GM12878 (cell line): ENCODE measurements at regions of chr5 and their contacts with region 1.

Region 1: GRCh38 chr5:76175051-76175666 is 92.0 kb downstream of the SV2C start:
- DNase-seq: peak; percentile 32
- ATAC-seq: peak; percentile 82
- H3K4me3 ChIP-seq: peak overlapping the region; percentile 45; the same call in 1 of the 2 replicates
- H3K27ac ChIP-seq: peak overlapping the region; percentile 57
- H3K4me1 ChIP-seq: peaks cover 25% of the 10 kb centered on the region
- H3K27me3 ChIP-seq: no peaks in the 10 kb centered on the region
- CTCF ChIP-seq: peak; percentile 83 to 89 (median 84)
- EP300 ChIP-seq: no peak
- POLR2A ChIP-seq: no peak
- RAD21 ChIP-seq: peak; percentile 94

Region 2: GRCh38 chr5:75236322-75237316 is 938.5 kb before region 1 on chr5 and contains the start of gene ANKRD31:
- CTCF ChIA-PET with region 1: interaction called, 18 read pairs
- POLR2A ChIA-PET with region 1: no interaction called
- RAD21 ChIA-PET with region 1: interaction called, 5 read pairs
- SMC1A ChIA-PET with region 1: interaction called, 4 read pairs
- in situ Hi-C with region 1: no loop called
- intact Hi-C with region 1: loop called (anchors 10 kb)
- DNase-seq: peak; percentile 42
- ATAC-seq: peak; percentile 100
- H3K4me3 ChIP-seq: peak within 1 kb of the TSS; percentile 63
- H3K27ac ChIP-seq: no peak within 1 kb of the TSS
- H3K4me1 ChIP-seq: peaks cover 3% of the 10 kb centered on the region; the same call in 1 of the 2 replicates
- H3K27me3 ChIP-seq: no peaks in the 10 kb centered on the region
- CTCF ChIP-seq: peak; percentile 60 to 85 (median 72); a peak in 5 of 6 replicates
- EP300 ChIP-seq: peak in 1 of 2 experiments; percentile 16; a peak in 1 of 4 replicates
- POLR2A ChIP-seq: peak; percentile 71
- RAD21 ChIP-seq: peak; percentile 64
- polyA plus RNA-seq, gene ANKRD31: 0.02 TPM in 1 of 2 experiments, not detected in the other

Region 3: DNA sequence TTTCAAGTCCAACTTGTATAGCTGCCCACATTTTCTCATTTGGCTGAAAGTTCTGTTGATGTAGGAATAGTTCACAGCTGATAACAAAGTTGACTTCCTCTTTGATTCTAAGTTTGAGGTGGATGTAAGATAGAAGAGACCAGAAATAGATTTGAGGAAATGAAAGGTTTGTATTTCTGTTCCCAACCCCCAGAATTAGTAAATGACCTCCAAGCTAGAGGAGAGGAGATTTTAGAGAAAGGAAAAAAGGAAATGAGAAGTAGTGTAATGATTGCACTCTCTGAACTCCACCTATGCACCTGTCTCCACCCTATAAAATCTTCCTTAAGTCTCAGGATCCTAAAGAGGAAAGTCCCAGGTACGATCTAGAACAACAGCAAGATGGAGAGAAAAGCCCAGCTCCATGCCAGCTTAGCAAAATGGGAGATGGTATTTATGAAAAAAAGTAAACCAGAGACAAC is 327.6 kb before region 1 on chr5:
- CTCF ChIA-PET with region 1: interaction called, 4 read pairs
- POLR2A ChIA-PET with region 1: no interaction called
- RAD21 ChIA-PET with region 1: interaction called, 6 read pairs
- SMC1A ChIA-PET with region 1: no interaction called
- in situ Hi-C with region 1: no loop called
- intact Hi-C with region 1: loop called (anchors 5 kb)
- DNase-seq: peak; percentile 83
- ATAC-seq: peak; percentile 89
- H3K4me3 ChIP-seq: peak overlapping the region; percentile 12; the same call in 1 of the 2 replicates
- H3K27ac ChIP-seq: peak overlapping the region; percentile 90
- H3K4me1 ChIP-seq: peaks cover 29% of the 10 kb centered on the region
- H3K27me3 ChIP-seq: no peaks in the 10 kb centered on the region
- CTCF ChIP-seq: no peak
- EP300 ChIP-seq: peak; percentile 96 to 98
- POLR2A ChIP-seq: no peak
- RAD21 ChIP-seq: peak; percentile 24

Region 4: GRCh38 chr5:76062502-76063041 is 112.6 kb before region 1 on chr5:
- CTCF ChIA-PET with region 1: no interaction called
- POLR2A ChIA-PET with region 1: no interaction called
- RAD21 ChIA-PET with region 1: no interaction called
- SMC1A ChIA-PET with region 1: no interaction called
- in situ Hi-C with region 1: no loop called
- intact Hi-C with region 1: no loop called
- DNase-seq: no peak
- ATAC-seq: no peak
- H3K4me3 ChIP-seq: no peak overlapping the region
- H3K27ac ChIP-seq: no peak overlapping the region
- H3K4me1 ChIP-seq: no peaks in the 10 kb centered on the region
- H3K27me3 ChIP-seq: no peaks in the 10 kb centered on the region; a peak in 1 of 4 replicates
- CTCF ChIP-seq: no peak
- EP300 ChIP-seq: no peak
- POLR2A ChIP-seq: no peak
- RAD21 ChIP-seq: no peak

Region 5: GRCh38 chr5:76074487-76075065 is 100.6 kb before region 1 on chr5:
- CTCF ChIA-PET with region 1: interaction called, 9 read pairs
- POLR2A ChIA-PET with region 1: no interaction called
- RAD21 ChIA-PET with region 1: interaction called, 11 read pairs
- SMC1A ChIA-PET with region 1: interaction called, 14 read pairs
- in situ Hi-C with region 1: no loop called
- intact Hi-C with region 1: loop called (anchors 2 kb)
- DNase-seq: no peak
- ATAC-seq: peak; percentile 86
- H3K4me3 ChIP-seq: no peak overlapping the region
- H3K27ac ChIP-seq: no peak overlapping the region
- H3K4me1 ChIP-seq: no peaks in the 10 kb centered on the region
- H3K27me3 ChIP-seq: peaks cover 0 to 4% of the 10 kb centered on the region in 2 experiments; a peak in 1 of 4 replicates
- CTCF ChIP-seq: peak; percentile 69 to 88 (median 77)
- EP300 ChIP-seq: no peak
- POLR2A ChIP-seq: no peak
- RAD21 ChIP-seq: peak; percentile 96

Region 6: GRCh38 chr5:76145945-76146344 is 29.2 kb before region 1 on chr5:
- CTCF ChIA-PET with region 1: interaction called, 33 read pairs
- POLR2A ChIA-PET with region 1: no interaction called
- RAD21 ChIA-PET with region 1: interaction called, 21 read pairs
- SMC1A ChIA-PET with region 1: interaction called, 15 read pairs
- in situ Hi-C with region 1: no loop called
- intact Hi-C with region 1: no loop called
- DNase-seq: no peak
- ATAC-seq: peak; percentile 68
- H3K4me3 ChIP-seq: no peak overlapping the region
- H3K27ac ChIP-seq: no peak overlapping the region
- H3K4me1 ChIP-seq: no peaks in the 10 kb centered on the region
- H3K27me3 ChIP-seq: no peaks in the 10 kb centered on the region
- CTCF ChIP-seq: peak; percentile 21 to 46 (median 42)
- EP300 ChIP-seq: no peak
- POLR2A ChIP-seq: no peak
- RAD21 ChIP-seq: peak; percentile 49

Region 7: DNA sequence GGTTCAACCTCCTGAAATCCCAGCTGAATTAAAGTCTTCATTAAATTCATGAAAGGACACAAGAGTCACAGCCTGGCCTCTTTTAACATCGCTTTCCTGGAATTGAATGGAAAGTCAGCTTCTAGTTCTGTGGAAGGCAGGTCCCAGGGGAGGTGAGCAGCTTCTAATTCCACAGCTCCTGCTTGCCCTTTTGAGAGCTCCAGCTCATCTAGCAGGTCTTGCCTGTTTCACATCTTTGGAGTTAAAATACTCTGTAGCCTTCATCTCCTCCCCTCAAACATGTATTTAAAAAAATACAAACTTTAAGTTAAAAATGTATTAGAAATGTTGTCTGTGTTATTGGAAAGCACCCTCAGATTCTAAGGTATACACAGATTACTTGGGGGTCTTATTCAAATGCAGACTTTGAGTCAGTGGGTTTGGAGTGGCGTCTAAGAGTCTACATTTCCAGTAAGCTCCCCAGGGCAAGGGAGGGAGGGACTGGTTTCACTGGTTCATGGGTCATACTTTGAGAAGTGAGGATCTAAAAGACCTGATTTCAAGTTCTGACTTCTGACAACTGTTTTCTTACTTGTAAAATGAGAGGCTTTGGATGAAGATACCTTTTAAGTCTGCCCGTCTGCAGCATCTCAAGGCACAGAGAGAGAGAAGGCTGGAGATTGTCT is 16.8 kb after region 1 on chr5:
- CTCF ChIA-PET with region 1: interaction called, 11 read pairs
- POLR2A ChIA-PET with region 1: no interaction called
- RAD21 ChIA-PET with region 1: no interaction called
- SMC1A ChIA-PET with region 1: interaction called, 4 read pairs
- in situ Hi-C with region 1: no loop called
- intact Hi-C with region 1: no loop called
- DNase-seq: no peak
- ATAC-seq: no peak
- H3K4me3 ChIP-seq: no peak overlapping the region
- H3K27ac ChIP-seq: no peak overlapping the region
- H3K4me1 ChIP-seq: no peaks in the 10 kb centered on the region
- H3K27me3 ChIP-seq: no peaks in the 10 kb centered on the region
- CTCF ChIP-seq: no peak
- EP300 ChIP-seq: no peak
- POLR2A ChIP-seq: no peak
- RAD21 ChIP-seq: no peak